T47D (cell line): ENCODE measurements at regions of chr9 and their contacts with region 1.

Region 1: DNA sequence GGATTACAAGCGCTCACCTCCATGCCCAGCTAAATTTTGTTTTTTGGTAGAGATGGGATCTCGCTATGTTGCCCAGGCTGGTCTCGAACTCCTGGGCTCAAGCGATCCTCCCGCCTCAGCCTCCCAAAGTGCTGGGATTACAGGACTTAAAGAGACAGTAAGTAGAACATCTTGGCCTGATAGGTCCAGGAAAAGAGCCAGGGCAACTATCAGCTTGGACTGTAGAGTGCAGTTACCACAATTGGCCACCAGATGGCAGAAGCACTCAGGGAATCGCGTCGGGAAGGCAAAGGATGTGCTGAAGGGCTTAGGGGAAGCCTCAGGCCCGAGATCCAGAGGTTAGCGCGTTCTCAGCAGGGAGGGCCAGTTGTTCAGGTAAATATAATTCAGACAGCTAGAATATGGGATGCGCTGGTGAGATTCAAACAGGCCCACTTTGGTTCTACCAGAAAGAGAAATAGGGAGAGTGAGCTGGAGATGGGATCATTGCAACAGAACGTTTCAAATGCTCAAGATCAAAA is 21.5 kb downstream of the C9orf57 start:
- DNase-seq: peak; percentile 46 to 75

Region 2: DNA sequence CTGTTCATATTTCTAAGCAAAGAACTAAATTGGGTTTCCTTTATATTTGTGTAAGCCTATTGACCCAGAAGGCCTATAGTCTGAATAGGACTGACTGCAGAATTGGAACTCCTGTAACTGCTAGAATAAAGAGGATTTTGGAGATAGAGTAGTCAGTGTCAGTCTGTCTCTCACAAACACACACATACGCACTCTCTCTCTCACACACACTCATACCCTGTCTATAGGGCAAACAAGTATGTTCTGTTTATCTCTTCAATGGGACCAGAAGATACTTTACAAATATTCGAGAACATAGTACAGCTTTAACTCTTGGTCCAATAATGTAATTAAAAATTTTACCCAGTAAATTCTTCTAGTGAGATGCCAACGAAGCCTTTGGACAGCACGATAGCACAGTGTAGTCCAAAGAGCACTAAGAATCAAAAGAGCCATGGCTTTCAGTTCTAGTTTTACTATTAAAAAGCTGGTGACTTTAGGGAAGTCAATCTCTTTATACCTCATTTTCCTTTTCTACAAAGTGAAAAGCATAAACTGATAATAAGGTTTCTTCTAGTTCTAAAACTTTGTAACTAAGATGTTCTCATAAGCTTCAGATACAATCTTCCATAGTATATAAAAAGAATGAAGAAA is 147.3 kb before region 1 on chr9:
- in situ Hi-C with region 1: no loop called
- DNase-seq: no peak

Region 3: GRCh38 chr9:72089451-72090130 is 50.6 kb after region 1 on chr9:
- in situ Hi-C with region 1: no loop called
- DNase-seq: no peak

Region 4: GRCh38 chr9:72217306-72217842 is 178.4 kb after region 1 on chr9:
- in situ Hi-C with region 1: no loop called
- DNase-seq: peak in 1 of 2 experiments; percentile 11

Region 5: DNA sequence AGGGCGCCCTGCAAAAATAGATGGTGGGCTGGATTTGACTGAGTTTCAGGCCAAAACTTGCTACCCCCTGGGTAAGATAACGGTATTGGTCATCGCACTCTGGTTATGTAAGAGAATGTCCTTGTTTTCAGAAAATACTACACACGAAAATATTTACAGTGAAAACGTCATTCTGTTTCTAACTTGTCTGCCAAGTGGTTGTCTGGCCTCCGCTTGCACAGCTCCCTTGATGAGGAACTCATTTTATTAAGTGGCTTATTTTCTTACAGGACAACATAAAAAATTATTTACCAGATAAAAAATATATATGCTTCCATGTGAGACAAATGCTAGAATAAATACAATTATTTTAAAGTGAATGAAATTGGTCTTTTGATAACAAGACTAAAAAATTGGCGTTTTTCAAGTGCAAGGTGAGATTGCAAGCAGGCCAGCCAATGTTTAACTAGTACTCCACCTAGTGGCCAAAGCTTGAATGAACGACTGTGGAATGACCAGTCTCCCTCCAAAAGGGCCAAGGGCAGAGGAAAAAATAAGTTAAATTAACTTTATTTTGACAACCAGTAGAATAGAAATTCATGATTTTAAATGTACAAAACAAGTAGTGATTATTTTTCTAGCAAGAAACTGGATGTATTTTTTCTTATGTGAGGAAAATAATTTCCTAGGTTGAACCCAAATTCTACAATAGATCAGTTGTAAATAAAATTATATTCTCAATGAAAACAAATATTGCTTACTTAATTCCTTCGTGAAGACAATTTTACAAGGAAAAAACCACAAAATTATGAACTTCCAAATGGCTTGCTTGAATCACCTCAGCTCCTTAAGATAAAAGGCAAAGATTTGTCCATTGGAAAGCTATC is 232.9 kb after region 1 on chr9:
- in situ Hi-C with region 1: loop called (anchors 25 kb)
- DNase-seq: peak; percentile 20 to 55